ENCODE measurements at regions of chr1 and their contacts with region 1.

Region 1: GRCh38 chr1:245380790-245381535 is 226.2 kb downstream of the KIF26B start:
- DNase-seq: no peak
- ATAC-seq: no peak
- H3K4me3 ChIP-seq: no peak overlapping the region
- H3K27ac ChIP-seq: no peak overlapping the region
- H3K4me1 ChIP-seq: no peaks in the 10 kb centered on the region
- H3K27me3 ChIP-seq: peaks cover 70% of the 10 kb centered on the region
- CTCF ChIP-seq: peak; percentile 65

Region 2: DNA sequence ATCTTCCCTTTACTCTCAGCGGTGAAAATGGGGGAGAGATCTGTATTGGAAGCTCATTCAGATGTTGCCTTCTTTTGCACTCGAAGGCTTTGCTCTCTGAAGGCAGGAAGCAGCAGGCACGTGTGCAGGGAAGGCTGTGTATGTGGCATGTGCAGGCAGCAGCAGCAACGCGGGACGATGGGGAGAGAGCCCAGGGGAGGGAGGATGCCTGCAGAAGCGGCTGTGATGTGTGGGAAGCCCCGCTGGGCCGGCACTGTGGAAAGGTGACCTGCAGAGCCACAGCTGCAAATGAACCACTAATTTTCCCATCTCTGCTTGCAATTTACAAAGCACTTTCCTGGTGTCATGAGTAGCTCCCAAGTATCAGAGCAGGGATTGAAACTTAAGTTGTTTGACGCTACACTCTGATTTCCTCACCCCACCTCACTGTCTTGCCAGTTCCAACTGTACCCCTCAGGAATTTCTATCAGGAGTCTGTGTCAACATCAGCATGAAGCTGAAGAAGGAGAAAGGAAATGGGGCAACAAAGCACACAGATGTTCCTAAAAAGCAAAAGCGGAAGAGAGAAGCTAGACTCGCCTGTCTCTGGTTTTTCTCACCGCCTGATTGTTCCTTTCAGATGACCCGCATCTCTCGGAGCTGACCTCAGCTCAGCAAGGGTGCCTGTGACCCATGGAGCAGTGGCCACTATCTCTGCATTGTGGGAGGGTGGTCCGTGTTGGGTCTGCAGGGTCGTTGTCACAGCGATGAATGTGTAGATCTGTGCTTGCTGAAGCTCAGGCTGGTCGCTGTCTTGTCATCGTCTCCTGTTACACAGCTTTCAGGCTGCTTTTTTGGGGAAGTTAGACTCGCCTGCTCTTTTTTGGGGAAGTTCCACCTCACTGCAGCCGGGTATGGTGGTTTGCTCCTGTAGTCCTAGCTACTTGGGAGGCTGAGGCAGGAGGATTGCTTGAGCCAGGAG is 70.1 kb before region 1 on chr1:
- CTCF ChIA-PET with region 1: interaction called, 12 read pairs
- POLR2A ChIA-PET with region 1: no interaction called
- intact Hi-C with region 1: no loop called
- DNase-seq: no peak
- ATAC-seq: no peak
- H3K4me3 ChIP-seq: no peak overlapping the region
- H3K27ac ChIP-seq: no peak overlapping the region
- H3K4me1 ChIP-seq: no peaks in the 10 kb centered on the region
- H3K27me3 ChIP-seq: peaks cover 59% of the 10 kb centered on the region
- CTCF ChIP-seq: no peak

Region 3: GRCh38 chr1:245397771-245398170 is 16.8 kb after region 1 on chr1:
- CTCF ChIA-PET with region 1: no interaction called
- POLR2A ChIA-PET with region 1: no interaction called
- intact Hi-C with region 1: no loop called
- DNase-seq: no peak
- ATAC-seq: no peak
- H3K4me3 ChIP-seq: no peak overlapping the region
- H3K27ac ChIP-seq: no peak overlapping the region
- H3K4me1 ChIP-seq: no peaks in the 10 kb centered on the region
- H3K27me3 ChIP-seq: peaks cover 89% of the 10 kb centered on the region
- CTCF ChIP-seq: no peak

Region 4: GRCh38 chr1:245585252-245585959 is 204.4 kb after region 1 on chr1:
- CTCF ChIA-PET with region 1: interaction called, 13 read pairs
- POLR2A ChIA-PET with region 1: no interaction called
- intact Hi-C with region 1: no loop called
- DNase-seq: peak; percentile 56
- ATAC-seq: peak; percentile 91
- H3K4me3 ChIP-seq: no peak overlapping the region
- H3K27ac ChIP-seq: no peak overlapping the region
- H3K4me1 ChIP-seq: peaks cover 8% of the 10 kb centered on the region; the same call in 1 of the 2 replicates
- H3K27me3 ChIP-seq: peaks cover 77% of the 10 kb centered on the region
- CTCF ChIP-seq: no peak

Measured in PC-3 (cell line).